Activated CD4-positive, alpha-beta T cell treated with anti-CD3 and anti-CD28 coated beads, Interleukin-2, amount 10 ng/mL, durations not matched to agents 24 days and 14 days (primary cell): ENCODE measurements at regions of chr11 and their contacts with region 1.

Region 1: DNA sequence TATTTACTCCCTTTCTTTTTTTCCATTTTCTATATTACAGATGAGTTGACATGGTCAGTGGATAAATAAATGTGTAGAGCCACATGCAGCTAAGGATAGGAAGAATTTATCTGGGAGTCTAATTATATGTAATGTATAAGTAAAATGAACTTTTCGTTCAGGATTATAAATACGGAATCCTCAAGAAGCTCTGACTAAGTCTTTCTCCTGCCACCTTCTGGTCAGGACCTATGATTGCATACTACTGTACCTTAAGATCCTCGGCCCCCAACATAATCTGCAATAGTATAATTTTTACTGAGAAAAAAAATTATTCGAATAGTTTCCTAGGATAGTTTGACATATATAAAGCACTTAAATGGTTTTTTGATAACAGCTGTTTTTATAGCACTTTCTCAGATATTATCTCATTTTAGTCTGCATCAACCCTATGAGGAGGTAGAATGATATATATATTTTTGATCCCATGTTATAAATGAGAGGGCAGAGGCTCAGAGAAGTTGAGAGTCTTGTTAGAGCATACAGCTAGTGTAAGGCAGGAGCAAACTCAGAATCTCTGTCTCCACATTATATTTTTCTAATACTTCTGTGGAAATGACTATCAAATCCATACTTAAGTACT is 36.1 kb downstream of the CCDC90B start:
- DNase-seq: peak; percentile 68
- H3K4me3 Mint-ChIP-seq: no peak overlapping the region
- H3K27ac Mint-ChIP-seq: no peak overlapping the region
- H3K4me1 Mint-ChIP-seq: no peaks in the 10 kb centered on the region
- H3K27me3 Mint-ChIP-seq: peaks cover 2% of the 10 kb centered on the region

Region 2: GRCh38 chr11:82867495-82868082 is 382.5 kb before region 1 on chr11:
- intact Hi-C with region 1: loop called (anchors 1 kb)
- DNase-seq: peak; percentile 93
- H3K4me3 Mint-ChIP-seq: no peak overlapping the region
- H3K27ac Mint-ChIP-seq: no peak overlapping the region
- H3K4me1 Mint-ChIP-seq: peaks cover 6% of the 10 kb centered on the region
- H3K27me3 Mint-ChIP-seq: peaks cover 2% of the 10 kb centered on the region

Region 3: DNA sequence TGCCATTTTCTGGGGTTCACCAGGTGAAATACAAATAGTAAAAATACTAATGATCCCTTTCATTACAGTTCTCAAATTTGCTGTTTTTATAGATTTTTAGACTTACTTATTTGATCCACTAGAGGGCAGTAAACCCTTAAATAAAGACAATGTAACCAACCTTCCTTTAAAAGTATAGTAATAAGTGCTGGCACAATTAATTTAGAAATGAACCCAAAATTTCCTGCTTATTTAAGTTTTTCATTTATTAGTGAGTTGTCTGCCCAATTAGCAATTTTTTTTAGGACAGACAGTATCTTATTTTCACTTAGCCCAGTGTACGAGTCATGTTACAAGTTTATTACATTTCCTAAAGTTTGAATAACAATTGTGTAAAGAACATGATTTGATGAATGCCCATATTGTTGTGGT is 343.8 kb before region 1 on chr11:
- intact Hi-C with region 1: loop called (anchors 1 kb)
- DNase-seq: no peak
- H3K4me3 Mint-ChIP-seq: no peak overlapping the region
- H3K27ac Mint-ChIP-seq: no peak overlapping the region
- H3K4me1 Mint-ChIP-seq: peaks cover 42% of the 10 kb centered on the region
- H3K27me3 Mint-ChIP-seq: no peaks in the 10 kb centered on the region

Region 4: GRCh38 chr11:82927254-82927880 is 322.7 kb before region 1 on chr11:
- intact Hi-C with region 1: loop called (anchors 5 kb)
- DNase-seq: peak; percentile 78
- H3K4me3 Mint-ChIP-seq: no peak overlapping the region
- H3K27ac Mint-ChIP-seq: no peak overlapping the region
- H3K4me1 Mint-ChIP-seq: peaks cover 15% of the 10 kb centered on the region
- H3K27me3 Mint-ChIP-seq: no peaks in the 10 kb centered on the region

Region 5: GRCh38 chr11:83156150-83156995 is 93.7 kb before region 1 on chr11:
- intact Hi-C with region 1: no loop called
- DNase-seq: no peak
- H3K4me3 Mint-ChIP-seq: peak overlapping the region; percentile 100
- H3K27ac Mint-ChIP-seq: peak overlapping the region; percentile 100
- H3K4me1 Mint-ChIP-seq: peaks cover 28% of the 10 kb centered on the region
- H3K27me3 Mint-ChIP-seq: no peaks in the 10 kb centered on the region

Region 6: DNA sequence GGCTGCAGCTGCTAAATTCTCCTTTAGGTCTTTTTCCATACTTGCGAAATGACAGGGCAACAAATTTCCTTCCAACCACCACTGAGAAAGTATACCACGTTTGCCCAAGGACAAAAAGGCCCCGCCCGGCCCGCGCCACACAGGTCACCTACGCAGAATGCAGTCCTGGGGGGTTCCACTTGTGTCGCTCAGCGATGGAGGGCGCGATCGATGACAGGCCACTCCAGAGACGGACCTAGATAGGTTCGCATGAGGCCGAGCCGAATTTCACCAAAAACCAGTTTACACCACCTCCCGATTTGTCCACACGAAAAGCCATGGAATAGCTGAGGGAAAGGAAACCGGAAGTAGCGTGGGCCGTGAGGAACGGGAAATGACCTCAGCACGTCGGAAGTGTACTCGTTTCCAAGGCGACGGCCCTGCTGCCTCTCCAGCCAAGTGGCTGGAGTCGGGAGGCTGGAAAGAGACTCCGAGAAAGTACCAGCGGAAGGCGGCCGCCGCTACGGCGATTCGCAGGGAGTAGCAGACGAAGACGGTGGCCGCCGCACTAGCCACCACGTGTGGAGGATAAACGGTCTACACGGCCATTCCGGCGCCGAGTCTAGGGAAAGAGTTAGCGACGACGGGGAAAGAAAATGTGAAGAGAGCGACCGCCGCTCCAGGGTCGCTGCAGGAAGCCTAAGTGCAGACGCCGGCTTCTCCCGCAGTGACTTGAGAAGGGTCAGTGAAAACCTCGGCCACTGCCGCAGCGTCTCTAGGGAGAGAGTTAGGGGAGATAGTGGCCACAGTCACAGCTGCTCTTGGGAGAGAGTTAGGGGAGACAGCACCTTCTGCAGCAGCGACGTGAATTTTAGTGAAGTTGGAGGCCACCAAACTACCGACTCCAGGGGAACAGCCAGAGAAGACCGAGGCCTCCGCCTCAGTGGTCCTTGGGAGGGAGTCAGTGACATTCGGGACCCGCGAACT is 56.5 kb before region 1 on chr11 and contains the start of gene ANKRD42:
- intact Hi-C with region 1: loop called (anchors 2 kb)
- DNase-seq: peak; percentile 96
- H3K4me3 Mint-ChIP-seq: peak within 1 kb of the TSS; percentile 95
- H3K27ac Mint-ChIP-seq: peak within 1 kb of the TSS; percentile 90
- H3K4me1 Mint-ChIP-seq: peaks cover 33% of the 10 kb centered on the region
- H3K27me3 Mint-ChIP-seq: no peaks in the 10 kb centered on the region
- total RNA-seq, gene ANKRD42: 4.0 and 4.1 TPM in 2 replicates

Region 7: GRCh38 chr11:83265331-83265730 is 15.2 kb after region 1 on chr11:
- intact Hi-C with region 1: no loop called
- DNase-seq: no peak
- H3K4me3 Mint-ChIP-seq: no peak overlapping the region
- H3K27ac Mint-ChIP-seq: no peak overlapping the region
- H3K4me1 Mint-ChIP-seq: peaks cover 3% of the 10 kb centered on the region
- H3K27me3 Mint-ChIP-seq: no peaks in the 10 kb centered on the region